CD8-positive, alpha-beta T cell (primary cell): ENCODE measurements at regions of chr2 and their contacts with region 1.

Region 1: DNA sequence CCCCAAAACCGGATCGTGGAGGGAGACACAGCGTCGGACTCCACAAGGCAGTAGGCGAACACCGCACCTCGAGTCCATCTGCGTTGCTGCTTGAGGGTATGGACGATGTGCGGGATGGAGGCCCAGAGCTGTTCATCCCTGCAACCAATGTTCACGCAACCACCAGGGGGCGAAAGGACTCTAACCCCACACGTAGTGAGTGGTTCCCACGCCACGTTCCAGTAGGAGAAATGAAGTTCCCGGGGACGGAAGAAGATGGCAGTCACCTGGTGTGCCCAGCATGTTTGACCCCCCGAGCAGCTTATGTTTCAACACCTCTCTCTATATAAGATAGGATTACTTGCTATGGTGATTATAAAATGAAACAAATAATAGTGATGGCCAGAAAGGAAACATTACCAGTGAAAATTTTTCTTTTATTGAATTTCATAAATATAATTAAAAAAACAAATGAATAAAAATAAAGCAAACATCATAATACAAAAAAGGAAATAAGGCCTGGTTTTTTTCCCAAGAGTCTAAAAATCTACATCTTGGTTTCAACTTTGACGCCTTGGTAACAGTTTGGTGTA is 184.3 kb downstream of the SH3BP4 start:
- DNase-seq: peak in 8 of 9 experiments; percentile 25 to 65 (median 50)
- ATAC-seq: no peak
- H3K4me3 ChIP-seq: no peak overlapping the region
- H3K4me3 Mint-ChIP-seq: no peak overlapping the region
- H3K27ac ChIP-seq: no peak overlapping the region
- H3K27ac Mint-ChIP-seq: no peak overlapping the region
- H3K4me1 ChIP-seq: no peaks in the 10 kb centered on the region
- H3K4me1 Mint-ChIP-seq: no peaks in the 10 kb centered on the region
- H3K27me3 ChIP-seq: no peaks in the 10 kb centered on the region
- H3K27me3 Mint-ChIP-seq: peaks cover 37% of the 10 kb centered on the region
- CTCF ChIP-seq: peak; percentile 33

Region 2: DNA sequence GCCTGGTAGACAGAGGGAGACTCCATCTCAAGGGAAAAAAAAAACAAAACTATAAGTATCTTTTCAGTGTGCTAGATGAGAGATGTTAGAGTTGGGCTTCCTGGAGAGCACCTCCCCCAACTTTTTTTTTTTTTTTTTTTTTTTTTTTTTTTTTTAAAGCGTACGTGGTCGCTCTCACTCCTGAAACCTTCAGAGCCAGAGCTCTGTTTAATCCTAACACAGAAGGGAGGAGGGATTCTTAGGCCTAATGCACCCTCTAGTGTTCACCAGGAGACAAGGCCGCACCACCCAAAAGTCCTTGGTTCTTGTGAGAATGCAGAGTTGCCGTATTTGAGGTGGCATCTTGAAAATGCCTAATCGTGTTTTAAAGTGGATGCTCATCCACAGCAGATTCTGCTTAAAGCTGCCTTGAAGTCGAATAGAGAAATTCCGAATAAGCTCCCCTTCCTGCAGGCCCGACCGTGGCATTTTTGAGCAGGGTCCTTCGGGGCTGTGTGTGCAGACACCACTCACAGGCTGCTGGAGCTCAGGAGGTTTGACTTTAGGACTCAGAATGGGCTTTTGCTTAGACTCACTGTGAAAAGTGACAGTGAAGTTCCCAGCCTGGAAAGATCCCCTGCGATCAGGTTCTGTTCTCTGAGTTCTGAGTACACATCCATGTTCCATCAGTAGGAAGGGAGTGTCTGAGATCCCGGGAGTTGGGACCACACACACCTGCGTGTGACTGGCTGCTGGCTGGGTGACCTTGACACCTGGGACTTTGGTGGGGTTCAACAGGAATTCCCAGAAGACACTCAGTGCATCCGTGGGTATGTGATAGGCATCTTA is 610.4 kb after region 1 on chr2:
- CTCF ChIA-PET with region 1: interaction called, 3 read pairs
- POLR2A ChIA-PET with region 1: no interaction called
- intact Hi-C with region 1: loop called in 1 of 2 experiments (anchors 5 kb)
- DNase-seq: peak in 6 of 9 experiments; percentile 13 to 76 (median 34)
- ATAC-seq: no peak
- H3K4me3 ChIP-seq: no peak overlapping the region
- H3K4me3 Mint-ChIP-seq: no peak overlapping the region
- H3K27ac ChIP-seq: no peak overlapping the region
- H3K27ac Mint-ChIP-seq: no peak overlapping the region
- H3K4me1 ChIP-seq: no peaks in the 10 kb centered on the region
- H3K4me1 Mint-ChIP-seq: no peaks in the 10 kb centered on the region
- H3K27me3 ChIP-seq: no peaks in the 10 kb centered on the region
- H3K27me3 Mint-ChIP-seq: peaks cover 16% of the 10 kb centered on the region
- CTCF ChIP-seq: peak; percentile 48